ENCODE measurements at regions of chr13 and their contacts with region 1.

Region 1: DNA sequence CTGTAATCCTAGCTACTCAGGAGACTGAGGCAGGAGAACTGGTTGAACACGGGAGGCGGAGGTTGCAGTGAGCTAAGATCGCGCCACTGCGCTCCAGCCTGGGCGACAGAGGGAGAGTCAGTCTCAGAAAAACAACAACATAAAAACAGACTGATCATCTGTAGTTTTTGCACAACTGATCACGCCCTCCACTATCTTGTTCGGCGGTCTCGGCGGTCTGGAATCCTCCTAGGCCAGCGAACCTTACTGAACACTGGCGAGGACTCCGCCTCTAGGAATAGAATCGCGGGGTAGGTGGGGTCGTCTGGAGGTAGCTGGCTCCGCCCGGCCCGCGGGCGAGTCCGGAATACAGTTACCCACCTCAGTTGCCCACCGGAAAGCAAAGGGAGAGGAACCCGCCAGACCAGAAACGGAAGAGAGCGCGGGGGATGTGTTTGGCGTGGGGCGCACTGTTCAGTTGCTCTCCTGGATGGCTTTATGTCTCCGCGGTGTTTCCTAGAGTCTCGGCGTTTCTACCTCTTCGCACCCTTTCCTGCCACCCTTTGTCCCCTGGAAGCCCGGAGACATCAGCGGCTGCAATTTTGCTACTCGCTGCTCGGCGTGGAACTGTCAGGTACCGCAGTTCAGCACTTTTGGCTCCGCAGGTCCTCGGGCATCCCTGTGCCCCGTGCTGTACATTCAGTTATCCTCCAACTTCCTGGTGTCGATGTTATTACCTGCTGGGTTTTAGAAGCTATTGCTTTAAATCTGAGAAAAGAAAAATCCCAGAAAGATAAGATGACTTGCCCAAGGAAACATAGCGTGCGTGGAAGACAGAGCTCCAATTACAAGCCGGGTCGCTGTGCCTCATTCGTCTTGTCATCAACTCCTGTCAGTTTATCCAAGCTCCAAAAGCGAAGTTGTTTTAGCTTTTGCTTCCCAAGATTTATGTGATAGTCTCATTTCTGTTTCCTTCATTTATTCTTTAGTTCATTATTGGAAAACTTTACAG is 24.9 kb upstream of the HNRNPA1L2 start:
- DNase-seq: peak; percentile 92
- H3K4me3 Mint-ChIP-seq: peak overlapping the region; percentile 99
- H3K27ac Mint-ChIP-seq: peak overlapping the region; percentile 87
- H3K4me1 Mint-ChIP-seq: peaks cover 38% of the 10 kb centered on the region
- H3K27me3 Mint-ChIP-seq: no peaks in the 10 kb centered on the region

Region 2: GRCh38 chr13:52809310-52809769 is 192.0 kb after region 1 on chr13:
- CTCF ChIA-PET with region 1: no interaction called
- POLR2A ChIA-PET with region 1: no interaction called
- intact Hi-C with region 1: loop called (anchors 10 kb)
- DNase-seq: peak; percentile 68
- H3K4me3 Mint-ChIP-seq: no peak overlapping the region
- H3K27ac Mint-ChIP-seq: no peak overlapping the region
- H3K4me1 Mint-ChIP-seq: peaks cover 4% of the 10 kb centered on the region
- H3K27me3 Mint-ChIP-seq: peaks cover 15% of the 10 kb centered on the region

Region 3: GRCh38 chr13:52850396-52851136 is 233.2 kb after region 1 on chr13:
- CTCF ChIA-PET with region 1: no interaction called
- POLR2A ChIA-PET with region 1: no interaction called
- intact Hi-C with region 1: loop called (anchors 1 kb)
- DNase-seq: peak; percentile 65
- H3K4me3 Mint-ChIP-seq: peak overlapping the region; percentile 58
- H3K27ac Mint-ChIP-seq: no peak overlapping the region
- H3K4me1 Mint-ChIP-seq: peaks cover 24% of the 10 kb centered on the region
- H3K27me3 Mint-ChIP-seq: peaks cover 63% of the 10 kb centered on the region

Region 4: GRCh38 chr13:53045189-53045588 is 427.8 kb after region 1 on chr13:
- CTCF ChIA-PET with region 1: no interaction called
- POLR2A ChIA-PET with region 1: no interaction called
- intact Hi-C with region 1: no loop called
- DNase-seq: no peak
- H3K4me3 Mint-ChIP-seq: no peak overlapping the region
- H3K27ac Mint-ChIP-seq: no peak overlapping the region
- H3K4me1 Mint-ChIP-seq: no peaks in the 10 kb centered on the region
- H3K27me3 Mint-ChIP-seq: no peaks in the 10 kb centered on the region